Mammary epithelial cell (primary cell): ENCODE measurements at regions of chr2 and their contacts with region 1.

Region 1: DNA sequence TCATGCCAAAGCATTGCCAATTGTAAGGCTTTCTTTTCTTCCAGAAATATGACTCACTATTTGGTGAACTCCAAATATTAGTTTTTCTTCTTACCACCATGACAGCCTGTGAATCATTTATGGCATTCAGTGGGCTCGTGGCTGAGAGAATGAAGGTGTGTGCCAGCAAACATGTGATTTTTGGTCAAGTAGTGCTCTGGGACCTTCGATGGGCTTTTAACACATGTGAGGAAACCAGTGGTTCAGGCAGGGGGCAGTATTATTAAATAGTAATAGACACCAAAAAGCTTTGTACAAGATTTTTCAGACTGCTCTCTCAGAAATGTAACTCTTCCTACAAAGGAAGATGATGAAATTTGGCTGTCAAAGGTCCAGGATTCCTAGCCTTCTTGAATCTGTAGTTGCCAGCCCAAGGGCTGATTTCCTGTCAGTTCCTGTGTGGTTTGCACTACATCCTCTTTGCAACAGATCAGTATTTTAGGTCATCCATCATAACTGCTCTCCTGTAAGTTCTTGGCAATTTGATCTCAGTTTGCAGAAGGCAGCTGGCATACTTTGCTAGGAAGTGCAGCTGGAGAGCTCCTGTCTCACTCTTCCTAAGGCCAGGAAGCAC is 64.3 kb downstream of the BABAM2 start:
- DNase-seq: peak; percentile 92
- H3K4me3 ChIP-seq: peak overlapping the region in 1 of 3 experiments; percentile 4
- H3K27ac ChIP-seq: peak overlapping the region; percentile 84
- H3K4me1 ChIP-seq: peaks cover 66% of the 10 kb centered on the region
- H3K27me3 ChIP-seq: no peaks in the 10 kb centered on the region
- CTCF ChIP-seq: peak; percentile 3 to 33

Region 2: GRCh38 chr2:27771548-27772335 is 183.1 kb before region 1 on chr2 and contains the start of gene MRPL33:
- CTCF ChIA-PET with region 1: no interaction called
- dilution Hi-C with region 1: no loop called
- in situ Hi-C with region 1: no loop called
- intact Hi-C with region 1: no loop called
- DNase-seq: peak; percentile 88
- H3K4me3 ChIP-seq: peak within 1 kb of the TSS; percentile 76 to 93 (median 91)
- H3K27ac ChIP-seq: peak within 1 kb of the TSS; percentile 78
- H3K4me1 ChIP-seq: peaks cover 24% of the 10 kb centered on the region
- H3K27me3 ChIP-seq: no peaks in the 10 kb centered on the region
- CTCF ChIP-seq: no peak
- total RNA-seq, gene MRPL33: 40.2 to 83.6 TPM

Region 3: GRCh38 chr2:27798948-27799645 is 155.8 kb before region 1 on chr2:
- CTCF ChIA-PET with region 1: no interaction called
- dilution Hi-C with region 1: no loop called
- in situ Hi-C with region 1: no loop called
- intact Hi-C with region 1: loop called (anchors 1 kb)
- DNase-seq: peak; percentile 100
- H3K4me3 ChIP-seq: no peak overlapping the region
- H3K27ac ChIP-seq: peak overlapping the region; percentile 94
- H3K4me1 ChIP-seq: peaks cover 30% of the 10 kb centered on the region
- H3K27me3 ChIP-seq: no peaks in the 10 kb centered on the region
- CTCF ChIP-seq: no peak

Region 4: DNA sequence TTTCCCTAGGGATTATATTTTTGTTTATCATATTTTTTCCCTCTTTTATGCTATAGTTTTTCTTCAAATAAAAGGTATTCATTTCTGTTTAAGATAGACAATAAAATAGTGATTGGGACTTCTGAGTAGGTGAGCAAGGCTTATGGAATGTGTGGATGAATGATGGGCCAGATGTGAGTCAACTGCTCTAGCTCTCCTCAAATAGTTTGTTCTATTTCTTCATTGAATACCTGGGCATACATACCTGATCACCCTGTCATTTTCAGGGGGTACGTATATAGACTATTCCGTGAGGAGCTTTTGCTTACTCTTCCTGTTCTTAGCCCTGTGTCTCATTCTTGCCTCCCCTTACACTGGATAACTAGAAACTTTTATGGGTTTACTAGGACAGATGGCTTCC is 22.5 kb before region 1 on chr2:
- CTCF ChIA-PET with region 1: no interaction called
- dilution Hi-C with region 1: no loop called
- in situ Hi-C with region 1: no loop called
- intact Hi-C with region 1: loop called (anchors 2 kb)
- DNase-seq: peak; percentile 78
- H3K4me3 ChIP-seq: peak overlapping the region in 1 of 3 experiments; percentile 5
- H3K27ac ChIP-seq: peak overlapping the region; percentile 90
- H3K4me1 ChIP-seq: peaks cover 15% of the 10 kb centered on the region
- H3K27me3 ChIP-seq: no peaks in the 10 kb centered on the region
- CTCF ChIP-seq: no peak

Region 5: GRCh38 chr2:28175028-28175427 is 220.2 kb after region 1 on chr2:
- CTCF ChIA-PET with region 1: no interaction called
- dilution Hi-C with region 1: no loop called
- in situ Hi-C with region 1: no loop called
- intact Hi-C with region 1: loop called (anchors 5 kb)
- DNase-seq: no peak
- H3K4me3 ChIP-seq: no peak overlapping the region
- H3K27ac ChIP-seq: no peak overlapping the region
- H3K4me1 ChIP-seq: peaks cover 25% of the 10 kb centered on the region
- H3K27me3 ChIP-seq: no peaks in the 10 kb centered on the region
- CTCF ChIP-seq: peak; percentile 19 to 28

Region 6: DNA sequence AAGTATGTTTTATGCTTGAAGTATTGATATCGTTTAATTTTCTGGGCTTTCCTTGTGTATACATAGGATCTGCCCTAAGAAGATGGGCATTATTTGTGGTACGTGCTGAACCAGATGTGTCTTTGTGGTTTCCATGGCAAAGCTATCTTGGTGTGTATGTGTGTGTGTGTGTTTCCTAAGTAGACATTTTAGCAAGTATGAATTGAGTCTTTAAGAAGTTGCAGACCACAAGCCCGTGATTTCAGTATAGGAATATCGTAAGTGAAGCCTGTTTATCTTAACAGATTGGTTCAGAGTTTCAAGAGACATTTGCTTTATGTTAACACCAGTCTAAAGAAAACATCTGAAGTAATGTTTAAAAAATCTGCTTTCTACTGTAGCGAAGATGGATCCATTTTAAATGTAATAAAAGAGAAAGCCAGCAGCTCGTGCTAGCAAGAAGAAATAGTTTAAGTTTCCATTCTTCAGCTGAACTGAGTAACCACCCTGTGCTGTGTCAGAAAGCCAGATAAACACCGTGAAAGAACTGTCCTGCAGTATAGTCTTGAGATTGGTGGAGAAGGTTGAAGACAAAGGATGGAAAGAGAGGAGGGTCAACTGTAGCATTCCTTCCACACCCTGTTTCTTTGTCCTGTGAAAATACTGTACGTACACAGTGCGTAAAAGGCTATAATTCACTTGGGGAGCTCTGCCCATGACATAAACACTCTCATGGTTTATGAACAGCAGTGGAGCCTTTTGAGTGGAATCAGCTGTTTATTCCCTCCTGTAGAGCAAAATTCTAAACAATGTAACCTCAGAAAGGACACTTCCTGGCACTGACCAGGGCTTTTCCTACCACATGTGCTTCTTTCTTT is 345.8 kb after region 1 on chr2:
- CTCF ChIA-PET with region 1: no interaction called
- dilution Hi-C with region 1: no loop called
- in situ Hi-C with region 1: no loop called
- intact Hi-C with region 1: loop called (anchors 5 kb)
- DNase-seq: no peak
- H3K4me3 ChIP-seq: no peak overlapping the region
- H3K27ac ChIP-seq: no peak overlapping the region
- H3K4me1 ChIP-seq: peaks cover 12% of the 10 kb centered on the region
- H3K27me3 ChIP-seq: no peaks in the 10 kb centered on the region
- CTCF ChIP-seq: no peak